ENCODE measurements at regions of chr18 and their contacts with region 1.

Region 1: DNA sequence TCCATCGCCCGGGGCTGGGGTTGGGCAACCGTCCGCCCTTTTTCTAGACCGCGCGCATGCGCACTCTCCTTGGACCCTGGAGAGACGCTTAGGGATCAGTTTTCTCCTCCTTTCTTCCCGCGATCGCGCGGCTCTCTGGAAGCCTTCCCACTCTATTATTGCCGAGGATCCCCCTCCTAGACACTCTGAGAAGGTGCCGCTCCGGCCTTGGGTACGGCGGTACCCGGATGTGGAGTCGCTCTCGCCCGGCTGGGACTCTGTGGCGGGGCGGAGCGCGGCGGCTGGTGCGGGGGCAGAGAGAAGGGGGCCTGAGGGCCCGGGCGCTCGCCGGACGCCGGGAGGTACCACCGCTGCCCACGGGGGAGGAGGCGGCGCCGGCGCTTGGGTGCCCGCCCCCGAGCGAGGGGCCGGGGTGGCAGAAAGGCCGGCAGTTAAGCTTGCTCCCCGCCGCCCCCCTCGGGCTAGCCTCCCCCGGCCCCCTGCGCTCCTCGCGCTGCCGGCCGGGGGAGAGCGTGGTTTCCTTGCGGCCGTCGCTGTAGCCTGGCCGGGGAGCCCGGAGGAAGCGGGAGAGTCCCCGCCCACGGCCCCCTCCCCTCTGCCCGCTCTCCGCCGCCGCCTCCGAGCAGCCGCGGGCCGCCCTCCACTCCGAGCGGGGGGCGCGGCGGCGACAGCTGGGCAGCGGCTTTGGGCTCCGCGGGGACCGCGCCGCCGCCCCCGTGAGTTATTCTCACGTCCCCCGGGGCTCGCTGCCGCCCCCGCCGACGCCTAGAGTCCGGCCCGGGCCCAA is at the start of gene MIB1:
- DNase-seq: no peak
- H3K4me3 Mint-ChIP-seq: peak within 1 kb of the TSS; percentile 87
- H3K27ac Mint-ChIP-seq: peak within 1 kb of the TSS; percentile 96
- H3K4me1 Mint-ChIP-seq: peaks cover 15% of the 10 kb centered on the region
- H3K27me3 Mint-ChIP-seq: no peaks in the 10 kb centered on the region
- CTCF ChIP-seq: no peak
- total RNA-seq, gene MIB1: 40.5 and 49.5 TPM in 2 replicates

Region 2: GRCh38 chr18:21612125-21612991 is 128.6 kb before region 1 on chr18 and contains the start of gene SNRPD1:
- CTCF ChIA-PET with region 1: no interaction called
- POLR2A ChIA-PET with region 1: interaction called, 15 read pairs
- intact Hi-C with region 1: no loop called
- DNase-seq: peak; percentile 88
- H3K4me3 Mint-ChIP-seq: peak within 1 kb of the TSS; percentile 90
- H3K27ac Mint-ChIP-seq: peak within 1 kb of the TSS; percentile 96
- H3K4me1 Mint-ChIP-seq: peaks cover 6% of the 10 kb centered on the region
- H3K27me3 Mint-ChIP-seq: no peaks in the 10 kb centered on the region
- CTCF ChIP-seq: peak; percentile 93
- total RNA-seq, gene SNRPD1: 108 and 110 TPM in 2 replicates

Measured in MCF 10A (cell line).